Upper lobe of right lung (tissue), 1 donor: ENCODE measurements at regions of chr10 and their contacts with region 1.

Region 1: GRCh38 chr10:70363971-70364771 is 18.3 kb downstream of the LRRC20 start:
- DNase-seq: peak; percentile 95
- ATAC-seq: peak; percentile 99
- H3K4me3 ChIP-seq: peak overlapping the region; percentile 1
- H3K27ac ChIP-seq: peak overlapping the region; percentile 90
- H3K4me1 ChIP-seq: peaks cover 15% of the 10 kb centered on the region
- H3K27me3 ChIP-seq: no peaks in the 10 kb centered on the region
- CTCF ChIP-seq: peak; percentile 96

Region 2: GRCh38 chr10:70227548-70228320 is 136.4 kb before region 1 on chr10:
- intact Hi-C with region 1: loop called (anchors 5 kb)
- DNase-seq: no peak
- ATAC-seq: peak; percentile 52
- H3K4me3 ChIP-seq: no peak overlapping the region
- H3K27ac ChIP-seq: no peak overlapping the region
- H3K4me1 ChIP-seq: peaks cover 23% of the 10 kb centered on the region
- H3K27me3 ChIP-seq: no peaks in the 10 kb centered on the region
- CTCF ChIP-seq: no peak

Region 3: DNA sequence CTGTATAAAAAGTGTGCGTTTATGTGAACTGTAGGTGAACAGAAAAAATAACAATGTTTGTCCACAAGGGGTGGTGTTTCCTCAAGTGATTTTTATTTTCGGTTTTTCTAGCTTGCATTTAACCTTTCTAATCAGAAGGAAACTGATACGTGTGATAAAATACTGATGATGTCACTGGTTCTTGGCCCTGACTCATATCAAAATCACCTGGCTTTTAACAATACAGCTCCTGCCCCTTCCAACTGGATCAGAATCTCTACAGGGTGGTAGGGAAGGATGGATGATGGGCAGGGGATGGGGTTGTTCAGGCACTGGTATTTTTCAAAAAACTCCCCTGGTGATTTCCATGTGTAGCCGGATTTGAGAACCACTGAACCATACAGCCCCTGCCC is 91.2 kb before region 1 on chr10:
- intact Hi-C with region 1: loop called (anchors 10 kb)
- DNase-seq: no peak
- ATAC-seq: peak; percentile 18
- H3K4me3 ChIP-seq: no peak overlapping the region
- H3K27ac ChIP-seq: no peak overlapping the region
- H3K4me1 ChIP-seq: peaks cover 7% of the 10 kb centered on the region
- H3K27me3 ChIP-seq: no peaks in the 10 kb centered on the region
- CTCF ChIP-seq: peak; percentile 58